HepG2 (cell line): ENCODE measurements at regions of chr7 and their contacts with region 1.

Region 1: GRCh38 chr7:75905785-75906604 is 9.0 kb upstream of the POR start:
- DNase-seq: peak; percentile 97
- ATAC-seq: peak; percentile 88
- H3K4me3 ChIP-seq: peak overlapping the region in 1 of 3 experiments; percentile 55; a peak in 4 of 6 replicates
- H3K27ac ChIP-seq: peak overlapping the region; percentile 98
- H3K4me1 ChIP-seq: peaks cover 76% of the 10 kb centered on the region
- H3K27me3 ChIP-seq: no peaks in the 10 kb centered on the region
- CTCF ChIP-seq: 0 out of 2 replicates have a peak, but pooled peaks have one; percentile 31
- EP300 ChIP-seq: peak; percentile 70 to 73
- POLR2A ChIP-seq: peak; percentile 72 to 78
- RAD21 ChIP-seq: peak; percentile 64

Region 2: GRCh38 chr7:75878769-75879611 is 27.0 kb before region 1 on chr7 and contains the start of gene RHBDD2:
- CTCF ChIA-PET with region 1: no interaction called
- POLR2A ChIA-PET with region 1: interaction called, 5 read pairs
- in situ Hi-C with region 1: no loop called
- intact Hi-C with region 1: loop called (anchors 1 kb)
- DNase-seq: peak; percentile 84
- ATAC-seq: peak; percentile 96
- H3K4me3 ChIP-seq: peak within 1 kb of the TSS; percentile 80 to 96 (median 92)
- H3K27ac ChIP-seq: peak within 1 kb of the TSS; percentile 70
- H3K4me1 ChIP-seq: peaks cover 38% of the 10 kb centered on the region
- H3K27me3 ChIP-seq: no peaks in the 10 kb centered on the region; a peak in 1 of 5 replicates
- CTCF ChIP-seq: peak; percentile 52
- EP300 ChIP-seq: no peak; a peak in 1 of 4 replicates
- POLR2A ChIP-seq: peak; percentile 81 to 96
- RAD21 ChIP-seq: peak; percentile 67; the same call in 1 of the 2 replicates
- total RNA-seq, gene RHBDD2: 14.9 and 23.1 TPM in 2 replicates

Region 3: GRCh38 chr7:75920431-75921161 is 14.6 kb after region 1 on chr7:
- CTCF ChIA-PET with region 1: no interaction called
- POLR2A ChIA-PET with region 1: interaction called, 78 read pairs
- in situ Hi-C with region 1: no loop called
- intact Hi-C with region 1: loop called (anchors 1 kb)
- DNase-seq: peak; percentile 99
- ATAC-seq: peak; percentile 87
- H3K4me3 ChIP-seq: peak overlapping the region in 1 of 3 experiments; percentile 64; a peak in 2 of 6 replicates
- H3K27ac ChIP-seq: peak overlapping the region; percentile 90
- H3K4me1 ChIP-seq: peaks cover 88% of the 10 kb centered on the region
- H3K27me3 ChIP-seq: no peaks in the 10 kb centered on the region; a peak in 1 of 5 replicates
- CTCF ChIP-seq: no peak
- EP300 ChIP-seq: peak; percentile 94 to 96
- POLR2A ChIP-seq: peak in 1 of 2 experiments; percentile 77; a peak in 3 of 4 replicates
- RAD21 ChIP-seq: peak; percentile 50; the same call in 1 of the 2 replicates

Region 4: GRCh38 chr7:75957012-75957736 is 51.2 kb after region 1 on chr7:
- CTCF ChIA-PET with region 1: no interaction called
- POLR2A ChIA-PET with region 1: interaction called, 3 read pairs
- in situ Hi-C with region 1: no loop called
- intact Hi-C with region 1: loop called (anchors 2 kb)
- DNase-seq: peak; percentile 47
- ATAC-seq: no peak
- H3K4me3 ChIP-seq: no peak overlapping the region
- H3K27ac ChIP-seq: peak overlapping the region; percentile 77
- H3K4me1 ChIP-seq: peaks cover 88% of the 10 kb centered on the region
- H3K27me3 ChIP-seq: no peaks in the 10 kb centered on the region
- CTCF ChIP-seq: no peak
- EP300 ChIP-seq: no peak
- POLR2A ChIP-seq: no peak
- RAD21 ChIP-seq: no peak

Region 5: DNA sequence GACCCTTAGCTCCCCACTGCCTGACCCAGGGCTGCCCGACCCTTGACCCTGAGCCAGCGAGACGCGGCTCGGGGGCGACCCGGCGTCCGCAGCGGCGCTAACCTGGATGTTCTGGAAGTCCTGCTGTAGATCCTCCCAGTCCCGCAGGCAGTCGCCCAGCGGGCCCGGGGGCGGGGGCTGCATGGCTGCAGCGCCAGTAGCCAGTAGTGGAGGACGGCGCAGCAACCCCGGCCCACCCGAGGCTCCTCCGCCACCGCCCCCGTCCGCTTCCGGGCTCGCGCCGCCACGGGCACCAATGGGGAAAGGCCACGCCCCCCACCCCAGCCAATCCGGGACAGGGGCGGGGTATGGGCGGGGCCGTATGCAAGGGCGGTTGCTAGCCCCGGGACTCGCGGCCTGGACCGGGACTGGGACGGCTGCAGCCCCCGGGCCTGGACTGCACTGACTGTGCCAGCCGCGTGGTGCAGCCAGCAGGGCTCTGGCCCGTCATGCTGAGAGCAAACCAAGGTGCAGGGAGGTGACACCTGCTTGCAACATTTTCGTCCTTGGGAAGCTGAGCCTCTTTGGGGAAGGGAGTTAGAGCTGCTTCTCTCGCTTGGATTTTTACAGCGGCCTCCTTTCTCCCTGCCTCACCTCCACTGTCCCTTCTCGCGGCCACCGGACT is 88.5 kb after region 1 on chr7 and contains the start of gene TMEM120A:
- CTCF ChIA-PET with region 1: no interaction called
- POLR2A ChIA-PET with region 1: interaction called, 14 read pairs
- in situ Hi-C with region 1: no loop called
- intact Hi-C with region 1: no loop called
- DNase-seq: peak; percentile 88
- ATAC-seq: peak; percentile 86
- H3K4me3 ChIP-seq: peak within 1 kb of the TSS; percentile 88 to 98 (median 91)
- H3K27ac ChIP-seq: peak within 1 kb of the TSS; percentile 97
- H3K4me1 ChIP-seq: peaks cover 34% of the 10 kb centered on the region
- H3K27me3 ChIP-seq: no peaks in the 10 kb centered on the region
- CTCF ChIP-seq: peak; percentile 25; the same call in 1 of the 2 replicates
- EP300 ChIP-seq: 0 out of 4 replicates have a peak, but pooled peaks of 1 of the 2 experiments have one; percentile 20
- POLR2A ChIP-seq: peak in 1 of 2 experiments; percentile 96; a peak in 2 of 4 replicates
- RAD21 ChIP-seq: peak; percentile 26; the same call in 1 of the 2 replicates
- total RNA-seq, gene TMEM120A: 22.9 and 40.3 TPM in 2 replicates

Region 6: DNA sequence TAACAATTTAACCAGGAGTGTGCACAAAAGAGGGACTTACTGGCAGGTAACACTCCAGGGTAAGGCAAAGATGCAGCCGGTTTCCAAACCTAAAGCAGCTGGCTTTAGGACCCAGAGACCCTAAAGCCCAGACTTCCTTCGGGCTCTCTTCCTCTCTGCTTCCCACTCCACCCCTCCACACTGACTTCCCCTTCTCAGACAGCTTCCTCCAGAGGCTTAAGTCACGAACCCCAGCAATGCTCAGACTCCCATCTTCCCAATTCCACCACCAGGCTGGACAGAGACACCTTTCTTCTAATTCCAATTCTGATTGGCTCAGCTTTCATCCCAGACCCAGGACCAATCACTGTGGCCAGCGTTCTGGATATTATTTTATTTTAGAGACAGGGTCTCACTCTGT is 117.0 kb after region 1 on chr7:
- CTCF ChIA-PET with region 1: no interaction called
- POLR2A ChIA-PET with region 1: no interaction called
- in situ Hi-C with region 1: no loop called
- intact Hi-C with region 1: no loop called
- DNase-seq: no peak
- ATAC-seq: no peak
- H3K4me3 ChIP-seq: no peak overlapping the region
- H3K27ac ChIP-seq: no peak overlapping the region
- H3K4me1 ChIP-seq: peaks cover 8% of the 10 kb centered on the region
- H3K27me3 ChIP-seq: no peaks in the 10 kb centered on the region
- CTCF ChIP-seq: no peak
- EP300 ChIP-seq: no peak
- POLR2A ChIP-seq: no peak
- RAD21 ChIP-seq: no peak

Region 7: GRCh38 chr7:76040126-76040525 is 134.1 kb after region 1 on chr7:
- CTCF ChIA-PET with region 1: no interaction called
- POLR2A ChIA-PET with region 1: no interaction called
- in situ Hi-C with region 1: no loop called
- intact Hi-C with region 1: no loop called
- DNase-seq: no peak
- ATAC-seq: no peak
- H3K4me3 ChIP-seq: no peak overlapping the region
- H3K27ac ChIP-seq: no peak overlapping the region
- H3K4me1 ChIP-seq: peaks cover 10% of the 10 kb centered on the region
- H3K27me3 ChIP-seq: no peaks in the 10 kb centered on the region
- CTCF ChIP-seq: no peak
- EP300 ChIP-seq: no peak
- POLR2A ChIP-seq: no peak
- RAD21 ChIP-seq: no peak

Region 8: DNA sequence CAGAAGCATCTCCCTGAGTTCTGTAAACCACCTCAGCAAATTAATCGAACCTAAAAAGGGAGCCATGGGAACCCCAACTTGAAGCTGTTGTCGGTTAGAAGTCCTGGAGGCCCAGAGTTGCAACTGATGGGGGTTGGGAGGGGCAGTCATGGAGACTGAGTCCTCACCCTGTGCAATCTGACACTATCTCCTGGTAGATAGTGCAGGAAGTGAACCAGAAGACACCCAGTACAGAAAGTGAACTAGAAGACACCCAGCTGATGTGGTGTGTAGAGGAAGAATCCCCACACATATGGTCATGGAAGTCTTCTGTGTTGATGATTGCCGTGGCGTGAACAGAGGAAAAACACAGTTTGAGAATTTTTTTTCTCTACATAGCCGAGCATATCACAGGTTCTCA is 236.9 kb after region 1 on chr7:
- CTCF ChIA-PET with region 1: no interaction called
- POLR2A ChIA-PET with region 1: no interaction called
- in situ Hi-C with region 1: no loop called
- intact Hi-C with region 1: no loop called
- DNase-seq: no peak
- ATAC-seq: no peak
- H3K4me3 ChIP-seq: no peak overlapping the region
- H3K27ac ChIP-seq: no peak overlapping the region
- H3K4me1 ChIP-seq: peaks cover 58% of the 10 kb centered on the region
- H3K27me3 ChIP-seq: no peaks in the 10 kb centered on the region
- CTCF ChIP-seq: no peak
- EP300 ChIP-seq: no peak
- POLR2A ChIP-seq: no peak
- RAD21 ChIP-seq: no peak